Endothelial cell of umbilical vein (primary cell): ENCODE measurements at regions of chr12 and their contacts with region 1.

Region 1: DNA sequence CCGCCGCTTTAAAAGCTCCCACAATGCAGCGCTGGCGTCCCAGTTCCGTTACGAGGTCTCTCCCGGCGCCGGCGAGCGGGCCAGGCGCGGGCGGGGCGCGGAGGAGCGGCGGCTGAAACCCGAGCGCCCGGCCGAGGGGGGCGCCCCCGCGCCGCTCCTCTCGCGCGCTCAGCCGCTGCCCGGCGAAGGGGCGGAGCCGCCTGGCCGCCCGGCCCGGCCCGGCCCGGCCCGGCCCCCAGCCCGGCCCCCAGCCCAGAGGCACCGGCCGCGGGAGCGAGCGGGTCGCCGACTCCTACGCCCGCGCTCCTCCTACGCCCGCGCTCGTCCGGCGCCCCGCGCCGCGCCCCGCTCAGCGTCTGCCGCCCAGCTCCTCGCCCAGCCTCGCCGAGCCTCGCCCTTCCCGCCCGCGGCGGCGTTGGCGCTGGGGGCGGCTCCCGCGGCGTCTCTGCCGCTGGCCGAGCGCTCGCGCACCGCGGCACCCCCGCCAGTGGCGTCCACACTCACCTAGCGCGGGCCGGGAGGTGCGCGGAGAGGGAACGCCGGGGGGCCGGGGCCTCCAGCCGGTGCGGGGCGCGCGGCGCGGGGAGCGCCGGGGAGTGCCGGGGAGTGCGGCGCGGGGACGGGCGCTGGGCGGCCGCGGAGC is at the start of gene RASSF8:
- DNase-seq: peak; percentile 74
- H3K4me3 ChIP-seq: peak within 1 kb of the TSS; percentile 95 to 100 (median 100)
- H3K27ac ChIP-seq: peak within 1 kb of the TSS; percentile 95
- H3K4me1 ChIP-seq: peaks cover 20% of the 10 kb centered on the region
- H3K27me3 ChIP-seq: no peaks in the 10 kb centered on the region
- CTCF ChIP-seq: no peak
- POLR2A ChIP-seq: peak; percentile 4
- total RNA-seq, gene RASSF8: 58.3 and 59.3 TPM in 2 replicates

Region 2: GRCh38 chr12:25184132-25184531 is 774.4 kb before region 1 on chr12:
- CTCF ChIA-PET with region 1: no interaction called
- POLR2A ChIA-PET with region 1: no interaction called
- dilution Hi-C with region 1: no loop called
- intact Hi-C with region 1: no loop called
- DNase-seq: no peak
- H3K4me3 ChIP-seq: no peak overlapping the region
- H3K27ac ChIP-seq: no peak overlapping the region
- H3K4me1 ChIP-seq: no peaks in the 10 kb centered on the region
- H3K27me3 ChIP-seq: peaks cover 2 to 6% of the 10 kb centered on the region in 2 experiments
- CTCF ChIP-seq: no peak
- POLR2A ChIP-seq: no peak

Region 3: GRCh38 chr12:25557830-25558436 is 400.6 kb before region 1 on chr12:
- CTCF ChIA-PET with region 1: interaction called, 4 read pairs
- POLR2A ChIA-PET with region 1: no interaction called
- dilution Hi-C with region 1: no loop called
- intact Hi-C with region 1: loop called (anchors 5 kb)
- DNase-seq: peak; percentile 42
- H3K4me3 ChIP-seq: no peak overlapping the region
- H3K27ac ChIP-seq: no peak overlapping the region
- H3K4me1 ChIP-seq: no peaks in the 10 kb centered on the region
- H3K27me3 ChIP-seq: no peaks in the 10 kb centered on the region
- CTCF ChIP-seq: peak; percentile 26 to 36
- POLR2A ChIP-seq: no peak

Region 4: DNA sequence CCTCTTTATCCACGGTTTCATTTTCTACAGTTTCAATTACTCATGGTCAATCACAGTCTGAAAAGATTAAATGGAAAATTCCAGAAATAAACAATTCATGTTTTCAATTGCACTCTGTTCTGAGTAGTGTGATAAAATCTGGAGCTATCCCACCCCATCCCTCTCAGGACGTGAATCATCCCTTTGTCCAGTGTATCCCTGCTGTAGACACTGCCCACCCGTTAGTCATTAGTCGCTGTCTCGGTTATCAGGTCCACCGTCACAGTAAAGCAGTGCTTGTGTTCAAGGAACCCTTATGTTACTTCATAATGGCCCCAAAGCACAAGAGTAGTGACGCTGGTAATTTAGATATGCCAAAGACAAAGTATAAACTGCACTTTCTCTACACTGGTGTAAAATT is 264.5 kb before region 1 on chr12:
- CTCF ChIA-PET with region 1: no interaction called
- POLR2A ChIA-PET with region 1: no interaction called
- dilution Hi-C with region 1: no loop called
- intact Hi-C with region 1: loop called (anchors 5 kb)
- DNase-seq: peak; percentile 88
- H3K4me3 ChIP-seq: peak overlapping the region in 1 of 3 experiments; percentile 15
- H3K27ac ChIP-seq: peak overlapping the region; percentile 52
- H3K4me1 ChIP-seq: peaks cover 19% of the 10 kb centered on the region
- H3K27me3 ChIP-seq: no peaks in the 10 kb centered on the region
- CTCF ChIP-seq: no peak
- POLR2A ChIP-seq: no peak

Region 5: GRCh38 chr12:25840678-25841465 is 117.7 kb before region 1 on chr12:
- CTCF ChIA-PET with region 1: interaction called, 3 read pairs
- POLR2A ChIA-PET with region 1: no interaction called
- dilution Hi-C with region 1: no loop called
- intact Hi-C with region 1: loop called (anchors 1 kb)
- DNase-seq: peak; percentile 81
- H3K4me3 ChIP-seq: no peak overlapping the region
- H3K27ac ChIP-seq: peak overlapping the region; percentile 44
- H3K4me1 ChIP-seq: peaks cover 18% of the 10 kb centered on the region
- H3K27me3 ChIP-seq: no peaks in the 10 kb centered on the region
- CTCF ChIP-seq: no peak
- POLR2A ChIP-seq: no peak

Region 6: DNA sequence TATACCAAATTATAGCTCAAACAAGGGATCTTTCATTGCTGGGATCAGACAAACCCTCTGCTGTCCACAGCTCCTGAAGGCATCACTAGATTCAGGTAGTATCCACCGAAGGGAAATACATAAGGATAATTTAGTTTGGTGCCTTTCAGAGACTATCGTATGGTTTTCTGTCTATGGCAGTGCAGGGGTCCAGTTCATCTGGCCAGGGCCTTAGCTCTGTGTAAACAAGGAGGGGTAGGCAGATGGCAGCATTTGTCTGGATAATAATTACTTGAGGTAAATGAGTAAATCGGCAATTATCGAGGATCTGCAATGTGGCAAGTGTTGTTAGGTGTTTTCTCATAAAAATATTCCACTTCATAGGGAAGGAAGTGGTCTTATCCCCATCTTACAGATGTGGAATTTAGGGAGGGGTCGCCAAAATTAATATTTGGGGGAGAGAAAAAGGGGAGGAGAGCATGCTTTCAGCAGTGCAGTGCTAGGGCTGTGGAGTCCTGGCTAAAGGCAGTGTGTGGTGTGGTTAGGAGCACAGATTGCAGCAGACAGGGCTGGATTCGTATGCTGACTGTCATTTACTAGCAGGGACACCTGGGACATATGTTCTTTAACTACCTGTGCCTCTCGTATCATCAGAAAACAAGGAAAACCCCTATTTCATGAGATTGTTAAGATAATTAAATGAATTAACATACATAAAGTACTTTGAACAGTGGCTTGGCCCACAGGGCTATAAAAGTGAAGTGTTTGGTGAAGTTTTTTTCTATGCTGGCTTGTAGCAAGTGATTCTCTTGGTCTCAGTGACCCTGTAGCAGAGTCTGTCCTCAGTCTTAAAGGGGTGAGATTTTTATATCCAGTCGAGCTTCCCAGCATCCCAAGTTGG is 27.0 kb after region 1 on chr12:
- CTCF ChIA-PET with region 1: interaction called, 24 read pairs
- POLR2A ChIA-PET with region 1: no interaction called
- dilution Hi-C with region 1: no loop called
- intact Hi-C with region 1: loop called (anchors 2 kb)
- DNase-seq: no peak
- H3K4me3 ChIP-seq: no peak overlapping the region
- H3K27ac ChIP-seq: no peak overlapping the region
- H3K4me1 ChIP-seq: peaks cover 17% of the 10 kb centered on the region
- H3K27me3 ChIP-seq: no peaks in the 10 kb centered on the region
- CTCF ChIP-seq: no peak
- POLR2A ChIP-seq: no peak

Region 7: DNA sequence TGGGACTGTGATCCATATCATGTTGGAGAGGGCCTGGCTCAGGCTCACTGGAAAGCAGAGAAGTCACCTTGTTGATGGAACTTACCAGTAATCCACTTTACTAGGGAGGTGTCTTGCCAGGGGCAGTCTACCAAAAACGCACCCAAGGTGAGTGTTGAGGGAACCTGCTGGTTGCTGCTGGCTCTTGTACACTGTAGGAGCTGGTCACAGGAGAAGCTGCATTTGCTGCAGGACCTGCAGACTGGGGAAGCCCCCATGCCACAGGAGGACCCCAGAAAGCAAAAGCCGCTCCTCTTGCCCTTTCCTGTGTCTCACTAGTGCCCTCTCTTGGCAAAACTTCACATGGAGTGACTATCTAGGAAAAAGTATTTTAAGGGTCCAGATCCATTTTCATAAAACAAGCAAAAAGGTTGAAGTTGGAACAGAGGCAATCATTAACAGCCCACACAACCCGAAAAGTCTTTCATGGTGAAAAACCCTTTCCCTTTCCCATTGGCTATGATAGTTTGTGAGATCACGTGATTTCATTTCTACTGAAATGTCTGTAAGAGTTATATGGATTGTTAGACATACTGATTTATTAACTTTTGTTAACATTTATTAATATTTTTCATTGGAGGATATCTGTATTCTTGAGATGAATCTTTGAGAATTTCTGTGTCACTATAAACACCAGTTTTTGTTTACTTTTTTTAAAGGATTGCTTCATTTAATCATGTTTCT is 59.1 kb after region 1 on chr12:
- CTCF ChIA-PET with region 1: interaction called, 52 read pairs
- POLR2A ChIA-PET with region 1: interaction called, 8 read pairs
- dilution Hi-C with region 1: no loop called
- intact Hi-C with region 1: loop called (anchors 1 kb)
- DNase-seq: peak; percentile 69
- H3K4me3 ChIP-seq: no peak overlapping the region
- H3K27ac ChIP-seq: no peak overlapping the region
- H3K4me1 ChIP-seq: peaks cover 7% of the 10 kb centered on the region
- H3K27me3 ChIP-seq: no peaks in the 10 kb centered on the region
- CTCF ChIP-seq: peak; percentile 67
- POLR2A ChIP-seq: no peak